ENCODE measurements at regions of chr14 and their contacts with region 1.

Region 1: GRCh38 chr14:75709207-75709812 is 48.3 kb downstream of the TTLL5 start:
- DNase-seq: peak; percentile 73 to 89
- H3K4me3 ChIP-seq: no peak overlapping the region
- CTCF ChIP-seq: peak in 1 of 3 donors; percentile 15
- POLR2A ChIP-seq: no peak

Region 2: DNA sequence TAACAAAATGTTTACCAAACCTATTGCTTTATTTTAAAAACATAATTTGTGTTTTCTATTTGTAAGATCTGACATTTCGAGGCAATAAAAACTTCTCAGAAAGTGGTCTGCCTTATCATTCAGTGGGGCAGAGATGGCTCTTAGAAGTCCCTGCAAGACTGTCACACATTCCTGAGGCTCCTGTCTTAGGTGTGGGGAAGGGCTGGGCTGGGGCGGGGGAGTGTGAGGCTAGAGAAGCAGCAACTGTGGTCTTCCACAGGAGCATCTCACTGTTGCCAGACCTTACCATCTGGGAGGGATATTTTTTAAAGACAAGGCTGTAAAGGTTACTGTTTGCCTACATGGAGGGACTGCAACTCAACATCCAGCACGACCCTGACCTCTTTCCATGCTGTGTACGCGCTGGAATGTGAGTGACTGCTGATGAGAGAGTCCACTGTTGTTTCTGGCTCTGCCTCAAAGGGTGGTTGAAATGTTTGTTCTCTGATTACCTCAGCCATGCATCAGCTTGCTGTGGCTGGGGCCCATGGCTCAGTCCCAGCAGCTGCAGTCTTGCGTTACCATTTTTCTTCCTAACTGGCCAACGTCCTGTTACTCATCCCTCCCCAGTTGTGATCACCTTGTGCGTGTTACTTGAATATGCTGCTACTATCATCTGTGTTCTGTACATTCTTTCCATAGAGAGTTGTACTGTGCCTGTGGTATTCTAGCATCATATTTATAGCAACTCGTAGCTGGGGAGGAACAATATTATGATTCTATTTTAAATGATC is 61.1 kb before region 1 on chr14:
- intact Hi-C with region 1: no loop called
- DNase-seq: no peak
- H3K4me3 ChIP-seq: no peak overlapping the region
- CTCF ChIP-seq: peak in 1 of 3 donors; percentile 35
- POLR2A ChIP-seq: no peak

Region 3: GRCh38 chr14:75982266-75983018 is 273.1 kb after region 1 on chr14:
- intact Hi-C with region 1: loop called (anchors 5 kb)
- DNase-seq: peak; percentile 79 to 96
- H3K4me3 ChIP-seq: peak overlapping the region; percentile 66
- CTCF ChIP-seq: no peak
- POLR2A ChIP-seq: no peak

Measured in lower leg skin (tissue), 4 donors.